Left ventricle myocardium inferior (tissue), 1 donor: ENCODE measurements at regions of chr17 and their contacts with region 1.

Region 1: DNA sequence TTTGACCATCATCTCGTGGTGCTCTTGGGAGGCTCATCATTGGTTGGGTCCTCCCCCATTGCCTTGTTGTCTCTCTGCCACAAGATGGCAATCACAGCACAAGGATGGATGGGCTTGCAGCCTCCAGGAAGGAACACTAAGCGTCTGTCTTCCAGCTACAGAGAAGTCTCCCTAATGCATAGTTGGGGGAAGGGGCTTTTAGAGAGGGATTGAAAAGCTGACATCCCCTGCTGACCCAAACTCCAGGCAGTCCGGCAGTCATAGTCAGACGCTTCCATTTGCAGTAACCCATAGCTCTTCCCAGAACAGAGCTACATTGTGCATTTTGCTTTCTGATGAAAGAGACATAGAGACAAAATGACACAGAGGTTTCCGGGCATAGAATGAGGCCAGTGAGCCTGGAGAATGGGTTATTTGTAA is 111.4 kb downstream of the UTP18 start:
- DNase-seq: no peak
- H3K4me3 ChIP-seq: no peak overlapping the region
- H3K27ac ChIP-seq: no peak overlapping the region
- H3K4me1 ChIP-seq: no peaks in the 10 kb centered on the region
- H3K27me3 ChIP-seq: peaks cover 46% of the 10 kb centered on the region
- CTCF ChIP-seq: peak; percentile 59

Region 2: GRCh38 chr17:51537996-51538550 is 166.3 kb after region 1 on chr17:
- intact Hi-C with region 1: loop called (anchors 5 kb)
- DNase-seq: no peak
- H3K4me3 ChIP-seq: no peak overlapping the region
- H3K27ac ChIP-seq: no peak overlapping the region
- H3K4me1 ChIP-seq: no peaks in the 10 kb centered on the region
- H3K27me3 ChIP-seq: peaks cover 30% of the 10 kb centered on the region
- CTCF ChIP-seq: no peak